Endothelial cell of umbilical vein (primary cell): ENCODE measurements at regions of chr1 and their contacts with region 1.

Region 1: DNA sequence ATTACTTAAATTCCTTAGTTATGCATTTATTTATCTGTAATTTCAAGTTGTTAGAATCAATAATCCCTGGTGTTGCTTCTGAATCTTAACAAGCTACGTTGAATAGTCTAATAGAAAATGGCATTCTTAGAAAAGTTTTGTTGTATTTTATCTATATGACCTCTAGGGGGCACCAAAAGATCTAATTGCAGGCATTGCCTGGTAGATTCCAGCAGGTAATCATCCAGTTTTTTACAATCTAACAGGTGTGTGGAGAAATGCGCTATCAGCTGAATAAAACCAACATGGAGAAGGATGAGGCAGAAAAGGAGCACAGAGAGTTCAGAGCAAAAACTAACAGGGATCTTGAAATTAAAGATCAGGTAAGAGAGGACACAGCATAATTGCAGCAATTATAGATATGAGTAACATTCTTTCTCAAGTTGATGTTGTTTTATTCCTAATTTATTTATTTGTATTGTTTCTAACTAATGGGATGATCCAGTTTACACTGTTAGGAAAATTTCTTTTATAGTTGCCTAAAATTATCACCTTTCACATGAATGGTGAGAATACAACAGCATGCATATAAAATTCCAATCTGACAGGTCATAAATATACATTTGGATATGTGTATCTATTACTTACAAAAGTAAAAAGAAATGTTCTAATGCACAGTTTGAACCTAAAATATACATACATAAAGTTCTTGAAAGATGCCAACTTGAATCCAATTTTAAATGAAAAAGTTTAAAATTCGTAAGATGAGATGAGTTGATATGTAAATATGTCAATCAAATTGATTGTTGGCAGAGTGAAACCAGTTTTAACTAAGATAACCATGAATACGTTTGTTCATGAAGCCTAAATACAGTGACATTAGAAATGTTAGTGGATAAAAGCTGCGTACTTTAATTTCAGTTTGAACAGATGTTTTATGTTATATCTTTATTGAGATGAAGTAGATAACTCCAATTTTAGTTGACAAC is 88.4 kb downstream of the SDCCAG8 start:
- DNase-seq: peak; percentile 51
- H3K4me3 ChIP-seq: no peak overlapping the region
- H3K27ac ChIP-seq: no peak overlapping the region
- H3K4me1 ChIP-seq: peaks cover 17% of the 10 kb centered on the region
- H3K27me3 ChIP-seq: no peaks in the 10 kb centered on the region
- CTCF ChIP-seq: peak; percentile 20 to 37
- POLR2A ChIP-seq: no peak

Region 2: DNA sequence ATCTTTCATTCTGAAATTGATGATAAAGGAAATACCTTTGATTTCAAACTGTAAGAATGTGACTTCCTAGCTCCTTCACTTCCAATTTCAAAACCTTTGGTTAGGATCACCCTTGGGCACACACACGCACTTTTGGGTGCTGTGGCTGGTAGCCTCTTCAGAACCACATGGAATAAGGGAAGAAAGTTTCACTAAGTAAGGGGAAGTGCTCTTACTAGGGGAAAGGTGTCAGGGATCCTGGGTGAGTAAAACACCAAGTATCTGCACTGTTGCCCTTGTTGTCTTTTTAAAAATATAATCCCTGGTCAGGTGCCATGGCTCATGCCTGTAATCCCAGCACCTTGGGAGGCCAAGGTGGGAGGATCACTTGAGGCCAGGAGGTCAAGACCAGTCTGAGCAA is 44.0 kb after region 1 on chr1:
- CTCF ChIA-PET with region 1: interaction called, 11 read pairs
- POLR2A ChIA-PET with region 1: no interaction called
- dilution Hi-C with region 1: no loop called
- intact Hi-C with region 1: no loop called
- DNase-seq: no peak
- H3K4me3 ChIP-seq: no peak overlapping the region
- H3K27ac ChIP-seq: no peak overlapping the region
- H3K4me1 ChIP-seq: peaks cover 19% of the 10 kb centered on the region
- H3K27me3 ChIP-seq: no peaks in the 10 kb centered on the region
- CTCF ChIP-seq: no peak
- POLR2A ChIP-seq: no peak

Region 3: DNA sequence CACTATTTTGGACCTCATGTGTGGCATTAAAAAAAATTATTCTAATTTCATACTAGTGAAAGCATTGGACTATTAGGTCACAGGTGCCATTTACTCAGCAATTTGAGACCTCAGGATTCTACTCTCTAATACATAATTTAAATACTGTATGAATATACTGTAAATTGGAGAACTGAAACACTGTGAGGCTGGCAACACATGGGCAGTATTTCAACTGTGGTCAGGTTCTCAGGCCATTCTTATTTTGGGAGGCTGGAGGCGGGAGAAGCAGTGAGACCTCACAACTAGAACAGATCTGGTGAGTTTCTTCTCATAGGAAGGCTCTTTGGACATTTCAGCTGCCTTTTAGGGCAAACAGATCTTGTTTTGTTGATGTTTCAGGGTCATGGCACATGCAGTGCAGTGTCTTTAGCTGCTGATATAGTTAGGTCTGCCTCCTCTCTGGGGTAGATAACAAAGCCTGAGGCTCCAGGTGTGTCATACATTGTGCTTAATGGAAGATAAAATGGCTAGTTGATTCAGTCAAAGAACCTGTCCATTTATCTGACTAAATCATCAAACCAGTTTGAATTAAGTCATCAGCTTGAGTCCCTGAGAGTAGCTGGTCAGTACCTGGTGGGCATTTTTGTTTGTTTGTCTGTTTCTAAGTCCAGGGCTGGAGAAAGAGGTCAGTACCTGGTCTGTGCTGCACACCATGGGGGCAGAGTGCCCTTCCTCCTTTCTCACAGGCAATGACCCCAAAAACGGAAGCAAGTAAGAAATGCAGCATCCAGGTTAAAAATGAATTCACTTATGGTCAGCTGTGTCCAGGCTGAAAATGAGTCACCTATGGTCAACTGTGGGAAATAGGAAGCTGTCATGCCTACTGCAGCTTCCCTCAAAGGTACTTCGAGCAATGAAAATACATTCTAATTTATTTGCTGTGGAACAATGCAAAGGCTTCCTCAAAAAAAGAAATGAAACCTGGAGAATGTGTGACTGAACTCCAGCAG is 127.8 kb after region 1 on chr1:
- CTCF ChIA-PET with region 1: interaction called, 3 read pairs
- POLR2A ChIA-PET with region 1: no interaction called
- dilution Hi-C with region 1: no loop called
- intact Hi-C with region 1: loop called (anchors 1 kb)
- DNase-seq: peak; percentile 75
- H3K4me3 ChIP-seq: no peak overlapping the region
- H3K27ac ChIP-seq: peak overlapping the region; percentile 19
- H3K4me1 ChIP-seq: peaks cover 18% of the 10 kb centered on the region
- H3K27me3 ChIP-seq: no peaks in the 10 kb centered on the region
- CTCF ChIP-seq: no peak
- POLR2A ChIP-seq: no peak

Region 4: GRCh38 chr1:243748706-243749283 is 404.5 kb after region 1 on chr1:
- CTCF ChIA-PET with region 1: interaction called, 13 read pairs
- POLR2A ChIA-PET with region 1: no interaction called
- dilution Hi-C with region 1: no loop called
- intact Hi-C with region 1: loop called (anchors 1 kb)
- DNase-seq: peak; percentile 79
- H3K4me3 ChIP-seq: no peak overlapping the region
- H3K27ac ChIP-seq: no peak overlapping the region
- H3K4me1 ChIP-seq: peaks cover 4% of the 10 kb centered on the region
- H3K27me3 ChIP-seq: no peaks in the 10 kb centered on the region
- CTCF ChIP-seq: peak; percentile 55 to 58
- POLR2A ChIP-seq: no peak

Region 5: GRCh38 chr1:243946946-243947345 is 602.7 kb after region 1 on chr1:
- CTCF ChIA-PET with region 1: interaction called, 4 read pairs
- POLR2A ChIA-PET with region 1: no interaction called
- dilution Hi-C with region 1: no loop called
- intact Hi-C with region 1: loop called (anchors 1 kb)
- DNase-seq: peak; percentile 52
- H3K4me3 ChIP-seq: no peak overlapping the region
- H3K27ac ChIP-seq: no peak overlapping the region
- H3K4me1 ChIP-seq: peaks cover 5% of the 10 kb centered on the region
- H3K27me3 ChIP-seq: no peaks in the 10 kb centered on the region
- CTCF ChIP-seq: peak; percentile 60 to 66
- POLR2A ChIP-seq: no peak

Region 6: GRCh38 chr1:244302889-244303613 is 958.8 kb after region 1 on chr1:
- CTCF ChIA-PET with region 1: interaction called, 15 read pairs
- POLR2A ChIA-PET with region 1: no interaction called
- dilution Hi-C with region 1: no loop called
- intact Hi-C with region 1: loop called (anchors 1 kb)
- DNase-seq: peak; percentile 53
- H3K4me3 ChIP-seq: no peak overlapping the region
- H3K27ac ChIP-seq: peak overlapping the region; percentile 13
- H3K4me1 ChIP-seq: peaks cover 52% of the 10 kb centered on the region
- H3K27me3 ChIP-seq: no peaks in the 10 kb centered on the region
- CTCF ChIP-seq: no peak
- POLR2A ChIP-seq: no peak